Psoas muscle (tissue), 8 donors: ENCODE measurements at regions of chr12 and their contacts with region 1.

Region 1: DNA sequence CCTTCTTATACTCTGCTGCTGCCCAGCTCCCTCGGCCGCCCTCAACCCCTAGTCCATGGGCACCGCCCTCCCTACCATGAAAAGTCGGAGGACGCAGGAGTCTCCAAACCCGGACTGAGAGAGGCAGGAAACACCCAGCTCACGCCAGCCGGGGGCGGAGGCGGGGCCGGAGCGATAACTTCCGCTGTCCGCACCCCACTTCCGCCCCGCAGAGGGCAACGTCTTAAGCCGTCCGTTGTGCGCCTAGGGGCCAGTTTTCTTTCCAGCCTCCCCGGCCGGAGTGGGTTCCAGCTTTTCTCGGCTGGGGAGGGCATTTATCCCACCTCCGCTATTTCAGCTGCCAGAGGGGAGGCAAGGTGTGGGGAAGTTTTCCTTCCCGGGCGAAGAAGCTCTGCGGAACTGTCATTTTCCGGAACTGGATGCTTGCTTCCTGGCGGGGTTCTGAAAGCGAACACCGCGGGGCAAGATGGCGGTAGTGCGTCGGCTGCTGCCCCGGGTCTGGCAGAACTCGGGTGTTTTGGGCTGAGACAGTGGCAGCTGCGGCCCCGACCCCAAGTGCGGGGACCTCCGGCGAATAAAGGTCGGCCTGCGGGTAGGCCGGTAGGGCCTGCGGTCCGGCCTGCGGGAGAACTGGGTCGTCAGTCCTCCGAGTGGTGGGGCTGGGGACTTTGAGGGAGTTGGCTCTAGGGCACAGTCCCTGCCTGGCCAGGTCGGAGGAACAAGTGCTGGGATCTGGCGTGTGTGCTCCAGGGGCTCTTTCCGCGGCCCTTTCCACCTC is at the starts of genes KCTD10 and UBE3B:
- DNase-seq: peak; percentile 90 to 94
- ATAC-seq: peak; percentile 98 to 99 (median 99)
- H3K4me3 ChIP-seq: peak within 1 kb of the TSS; percentile 95
- H3K27ac ChIP-seq: peak within 1 kb of the TSS; percentile 97
- H3K4me1 ChIP-seq: peaks cover 31% of the 10 kb centered on the region
- H3K27me3 ChIP-seq: no peaks in the 10 kb centered on the region
- CTCF ChIP-seq: no peak
- total RNA-seq, gene KCTD10: 13.0 to 21.8 (median 17.9) TPM
- total RNA-seq, gene UBE3B: 41.7 to 50.8 (median 46.3) TPM

Region 2: DNA sequence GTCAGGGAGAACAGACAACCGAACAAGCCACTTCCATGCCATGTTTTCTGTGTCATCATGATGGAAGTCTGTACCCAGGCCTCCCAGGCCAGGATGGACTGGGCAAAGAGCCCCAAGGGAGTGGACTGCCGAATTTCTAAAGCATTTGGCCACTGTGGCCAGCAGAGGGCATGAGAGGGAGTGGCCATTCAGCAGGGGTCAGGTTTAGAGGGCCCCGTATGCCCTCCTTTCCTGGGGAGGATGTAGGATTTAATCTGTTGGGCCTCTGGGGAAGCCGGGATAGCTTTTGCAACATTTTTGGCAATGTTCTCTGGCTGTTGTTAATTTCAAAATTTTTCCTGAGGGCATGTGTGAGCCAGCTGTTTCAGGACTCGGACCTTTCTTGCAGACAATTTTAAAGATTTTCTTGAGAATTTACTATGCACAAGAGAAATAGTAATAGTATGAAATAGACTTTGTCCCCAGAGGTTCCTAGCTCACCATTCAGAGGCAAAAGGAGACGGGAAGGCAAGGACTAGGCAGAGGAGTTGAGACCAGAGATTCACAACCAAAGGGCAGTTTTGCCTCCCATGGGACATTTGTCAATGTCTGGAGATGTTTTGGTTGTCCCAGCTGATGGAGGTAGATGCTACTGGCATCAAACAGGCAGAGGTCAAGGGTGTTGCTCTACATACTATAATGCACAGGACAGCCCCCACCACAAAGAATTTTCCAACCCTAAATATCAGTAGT is 343.0 kb before region 1 on chr12:
- intact Hi-C with region 1: no loop called
- DNase-seq: peak; percentile 73 to 90
- ATAC-seq: peak in 3 of 4 donors; percentile 28 to 35 (median 32)
- H3K4me3 ChIP-seq: peak overlapping the region; percentile 35
- H3K27ac ChIP-seq: peak overlapping the region; percentile 96
- H3K4me1 ChIP-seq: peaks cover 70% of the 10 kb centered on the region
- H3K27me3 ChIP-seq: no peaks in the 10 kb centered on the region
- CTCF ChIP-seq: peak; percentile 49

Region 3: GRCh38 chr12:109435428-109436187 is 41.8 kb before region 1 on chr12:
- intact Hi-C with region 1: loop called (anchors 5 kb)
- DNase-seq: no peak
- ATAC-seq: no peak
- H3K4me3 ChIP-seq: no peak overlapping the region
- H3K27ac ChIP-seq: no peak overlapping the region
- H3K4me1 ChIP-seq: peaks cover 11% of the 10 kb centered on the region
- H3K27me3 ChIP-seq: no peaks in the 10 kb centered on the region
- CTCF ChIP-seq: no peak

Region 4: DNA sequence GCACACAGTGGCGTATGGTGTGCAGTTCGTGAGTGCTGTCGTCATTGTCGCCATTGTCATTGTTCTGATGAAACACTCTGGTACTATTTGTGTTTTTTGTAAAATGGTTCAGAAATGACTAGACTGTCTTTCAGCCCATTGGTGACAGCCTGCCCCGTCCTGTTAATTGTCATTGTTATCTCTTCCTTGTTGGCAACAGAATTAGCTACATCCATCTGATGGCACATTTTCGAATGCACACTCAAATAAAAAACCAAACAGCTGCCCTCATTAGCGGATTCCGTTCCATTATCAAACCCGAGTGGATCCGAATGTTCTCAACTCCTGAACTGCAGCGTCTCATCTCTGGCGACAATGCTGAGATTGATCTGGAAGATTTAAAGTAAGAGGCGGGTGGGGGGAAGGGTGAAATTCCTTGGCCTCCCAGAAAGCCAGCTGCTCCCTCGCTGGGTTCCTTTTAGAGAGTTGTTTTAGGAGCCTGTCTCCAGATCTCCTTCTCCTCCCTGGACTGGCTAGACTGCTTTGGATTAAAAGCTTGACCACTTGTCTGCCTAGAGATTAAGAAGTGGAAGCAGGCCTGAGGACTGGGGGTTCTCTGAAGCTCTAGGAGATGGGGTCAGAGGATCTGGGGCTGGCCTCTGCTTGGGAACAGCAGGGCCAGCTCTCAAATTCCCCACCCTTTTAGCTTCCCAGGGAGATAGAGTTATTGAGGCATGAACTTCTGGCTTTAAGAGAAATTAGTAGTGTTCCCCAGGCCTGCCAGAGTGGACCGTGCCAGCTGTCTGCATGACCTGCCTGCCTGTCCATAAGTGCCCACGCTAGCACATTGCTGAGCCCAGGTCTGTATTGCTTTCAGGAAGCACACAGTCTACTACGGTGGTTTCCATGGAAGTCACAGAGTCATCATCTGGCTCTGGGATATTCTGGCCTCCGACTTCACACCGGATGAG is 52.6 kb after region 1 on chr12:
- intact Hi-C with region 1: no loop called
- DNase-seq: no peak
- ATAC-seq: no peak
- H3K4me3 ChIP-seq: no peak overlapping the region
- H3K27ac ChIP-seq: no peak overlapping the region
- H3K4me1 ChIP-seq: no peaks in the 10 kb centered on the region
- H3K27me3 ChIP-seq: no peaks in the 10 kb centered on the region
- CTCF ChIP-seq: no peak

Region 5: GRCh38 chr12:109844983-109845823 is 367.8 kb after region 1 on chr12:
- intact Hi-C with region 1: no loop called
- DNase-seq: peak; percentile 86 to 91
- ATAC-seq: peak; percentile 92 to 99 (median 95)
- H3K4me3 ChIP-seq: peak overlapping the region; percentile 30
- H3K27ac ChIP-seq: no peak overlapping the region
- H3K4me1 ChIP-seq: peaks cover 4% of the 10 kb centered on the region
- H3K27me3 ChIP-seq: no peaks in the 10 kb centered on the region
- CTCF ChIP-seq: peak; percentile 94